ENCODE measurements at regions of chr17 and their contacts with region 1.

Region 1: GRCh38 chr17:3905017-3905520 is 11.2 kb downstream of the P2RX1 start:
- DNase-seq: no peak
- H3K4me3 ChIP-seq: no peak overlapping the region
- H3K27ac ChIP-seq: no peak overlapping the region
- H3K4me1 ChIP-seq: no peaks in the 10 kb centered on the region; a peak in 1 of 4 replicates
- H3K27me3 ChIP-seq: no peaks in the 10 kb centered on the region
- CTCF ChIP-seq: no peak
- EP300 ChIP-seq: no peak
- RAD21 ChIP-seq: no peak

Region 2: GRCh38 chr17:4074831-4075495 is 169.9 kb after region 1 on chr17:
- CTCF ChIA-PET with region 1: interaction called, 10 read pairs
- POLR2A ChIA-PET with region 1: no interaction called
- DNase-seq: peak; percentile 61
- H3K4me3 ChIP-seq: no peak overlapping the region; a peak in 1 of 4 replicates
- H3K27ac ChIP-seq: no peak overlapping the region
- H3K4me1 ChIP-seq: no peaks in the 10 kb centered on the region
- H3K27me3 ChIP-seq: no peaks in the 10 kb centered on the region
- CTCF ChIP-seq: peak; percentile 81
- EP300 ChIP-seq: no peak
- RAD21 ChIP-seq: peak; percentile 79

Region 3: DNA sequence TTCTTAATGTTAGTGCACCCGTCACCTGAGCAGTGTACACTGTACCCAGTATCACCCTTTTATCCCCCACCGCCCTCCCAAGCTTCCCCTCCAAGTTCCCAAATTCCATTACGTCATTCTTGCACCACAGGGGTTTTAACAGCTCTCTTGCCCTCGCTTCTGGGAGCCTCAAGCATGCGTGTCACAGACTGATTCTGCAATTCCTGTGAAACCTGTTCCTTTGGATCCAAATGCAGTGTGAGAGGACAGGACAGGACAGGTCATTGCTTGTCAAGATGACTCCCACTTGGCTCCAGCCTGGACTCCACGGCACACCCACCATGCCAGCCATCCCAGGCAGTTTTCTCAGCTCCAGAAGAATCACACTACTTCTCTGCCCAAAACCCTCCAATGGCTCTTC is 282.0 kb after region 1 on chr17:
- CTCF ChIA-PET with region 1: no interaction called
- POLR2A ChIA-PET with region 1: no interaction called
- DNase-seq: no peak
- H3K4me3 ChIP-seq: no peak overlapping the region
- H3K27ac ChIP-seq: no peak overlapping the region
- H3K4me1 ChIP-seq: no peaks in the 10 kb centered on the region
- H3K27me3 ChIP-seq: no peaks in the 10 kb centered on the region
- CTCF ChIP-seq: no peak
- EP300 ChIP-seq: no peak
- RAD21 ChIP-seq: no peak